ENCODE measurements at regions of chr13 and their contacts with region 1.

Region 1: GRCh38 chr13:42328672-42329071 is 56.7 kb downstream of the AKAP11 start:
- DNase-seq: no peak
- H3K4me3 Mint-ChIP-seq: no peak overlapping the region
- H3K27ac Mint-ChIP-seq: peak overlapping the region; percentile 79
- H3K4me1 Mint-ChIP-seq: peaks cover 40% of the 10 kb centered on the region
- H3K27me3 Mint-ChIP-seq: no peaks in the 10 kb centered on the region

Region 2: GRCh38 chr13:42367831-42368230 is 39.2 kb after region 1 on chr13:
- intact Hi-C with region 1: loop called (anchors 1 kb)
- DNase-seq: no peak
- H3K4me3 Mint-ChIP-seq: no peak overlapping the region
- H3K27ac Mint-ChIP-seq: no peak overlapping the region
- H3K4me1 Mint-ChIP-seq: peaks cover 61% of the 10 kb centered on the region
- H3K27me3 Mint-ChIP-seq: no peaks in the 10 kb centered on the region

Region 3: DNA sequence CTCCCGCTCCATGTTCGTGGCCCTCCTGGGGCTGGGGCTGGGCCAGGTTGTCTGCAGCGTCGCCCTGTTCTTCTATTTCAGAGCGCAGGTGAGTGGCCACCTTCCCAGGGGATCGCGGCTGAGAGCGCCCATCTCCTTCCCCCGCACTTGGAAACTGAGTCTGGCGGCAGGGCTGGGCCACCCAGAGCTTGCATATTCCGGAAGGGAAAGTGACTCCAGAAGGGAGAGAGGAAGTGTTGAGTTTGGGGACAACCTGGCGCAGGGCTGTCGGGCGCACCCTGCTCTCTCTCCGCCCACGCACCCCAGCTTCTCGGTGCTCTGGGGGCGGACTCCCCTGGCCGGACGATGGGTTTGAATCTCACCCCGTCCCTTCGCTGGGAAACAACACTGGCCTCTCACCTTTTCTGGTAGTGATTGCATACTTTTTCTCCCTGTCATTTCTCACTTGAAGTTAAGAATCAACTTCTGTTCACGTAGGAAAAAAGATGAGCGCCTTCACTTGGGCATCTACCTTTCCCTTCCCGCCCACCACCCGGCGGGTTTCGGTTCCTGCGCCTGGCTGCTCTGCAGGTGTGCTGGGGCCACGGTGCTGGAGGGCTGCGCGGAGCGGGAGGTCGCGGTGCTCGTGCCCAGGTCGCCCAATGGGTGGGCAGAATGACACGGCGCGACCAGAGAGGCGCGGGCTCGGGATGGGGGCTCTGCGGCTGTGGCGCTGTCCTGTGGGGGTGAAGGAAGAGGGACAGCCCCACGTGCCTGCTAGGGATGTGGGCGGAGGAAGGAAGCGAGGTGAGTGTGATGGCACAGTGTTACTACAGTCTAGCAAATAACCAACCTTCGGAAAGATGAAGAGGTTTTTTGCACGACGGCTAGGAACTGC is 246.0 kb after region 1 on chr13:
- intact Hi-C with region 1: loop called (anchors 5 kb)
- DNase-seq: peak; percentile 30
- H3K4me3 Mint-ChIP-seq: peak overlapping the region; percentile 74
- H3K27ac Mint-ChIP-seq: peak overlapping the region; percentile 75
- H3K4me1 Mint-ChIP-seq: peaks cover 43% of the 10 kb centered on the region
- H3K27me3 Mint-ChIP-seq: peaks cover 5% of the 10 kb centered on the region

Measured in activated T-helper 2 cell treated with anti-CD3 and anti-CD28 coated beads, Interferon-gamma antibody, Interleukin-2, Interleukin-4, amounts not matched to agents 10 μg/mL and 5 μg/mL and 100 μg/mL, durations not matched to agents 14 hours and 24 hours and 36 hours (primary cell).